H1 (cell line): ENCODE measurements at regions of chr15 and their contacts with region 1.

Region 1: GRCh38 chr15:73697033-73697467 is 12.9 kb downstream of the CD276 start:
- DNase-seq: no peak
- H3K4me3 ChIP-seq: no peak overlapping the region
- H3K27ac ChIP-seq: 0 out of 2 replicates have a peak overlapping the region, but pooled peaks have one; percentile 3
- H3K4me1 ChIP-seq: peaks cover 0 to 21% (median 9%) of the 10 kb centered on the region in 4 experiments; a peak in 6 of 7 replicates
- H3K27me3 ChIP-seq: no peaks in the 10 kb centered on the region
- CTCF ChIP-seq: no peak
- EP300 ChIP-seq: no peak
- POLR2A ChIP-seq: no peak
- RAD21 ChIP-seq: no peak

Region 2: GRCh38 chr15:73524919-73525318 is 172.1 kb before region 1 on chr15:
- CTCF ChIA-PET with region 1: no interaction called
- POLR2A ChIA-PET with region 1: no interaction called
- DNase-seq: no peak
- H3K4me3 ChIP-seq: no peak overlapping the region
- H3K27ac ChIP-seq: no peak overlapping the region
- H3K4me1 ChIP-seq: peaks cover 0 to 2% (median 0%) of the 10 kb centered on the region in 4 experiments; a peak in 1 of 7 replicates
- H3K27me3 ChIP-seq: no peaks in the 10 kb centered on the region
- CTCF ChIP-seq: no peak
- EP300 ChIP-seq: no peak
- POLR2A ChIP-seq: no peak
- RAD21 ChIP-seq: no peak

Region 3: DNA sequence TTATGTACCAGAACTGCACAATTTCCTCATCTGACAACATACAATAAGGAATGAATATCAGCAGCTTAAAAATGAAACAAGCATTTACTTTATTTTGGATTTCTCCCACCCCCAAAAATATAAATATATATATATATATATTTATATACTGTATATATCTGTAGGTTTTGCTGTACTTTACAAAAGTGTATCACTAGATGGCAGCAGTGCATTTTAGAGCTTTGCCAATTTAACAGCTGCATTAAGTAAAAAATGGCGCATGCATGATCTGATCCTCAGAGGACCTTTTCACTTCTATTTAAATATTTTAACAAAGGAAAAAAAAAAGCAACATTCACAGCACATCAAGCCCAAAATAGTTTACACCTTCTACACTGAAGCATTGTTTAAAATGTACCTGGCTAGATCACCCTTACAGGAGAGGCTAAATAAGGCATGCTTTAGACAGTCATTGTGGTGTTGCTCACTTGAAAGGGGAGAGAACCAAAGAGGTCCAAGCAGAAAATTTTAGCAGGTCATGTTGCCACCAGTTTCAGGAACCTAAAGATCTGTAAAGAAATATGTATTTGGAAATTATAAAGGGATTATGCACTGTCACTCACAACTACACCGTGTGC is 136.4 kb before region 1 on chr15:
- CTCF ChIA-PET with region 1: interaction called, 43 read pairs
- POLR2A ChIA-PET with region 1: no interaction called
- DNase-seq: no peak
- H3K4me3 ChIP-seq: no peak overlapping the region
- H3K27ac ChIP-seq: no peak overlapping the region
- H3K4me1 ChIP-seq: no peaks in the 10 kb centered on the region
- H3K27me3 ChIP-seq: no peaks in the 10 kb centered on the region
- CTCF ChIP-seq: peak in 1 of 3 experiments; percentile 44; a peak in 1 of 4 replicates
- EP300 ChIP-seq: no peak
- POLR2A ChIP-seq: no peak
- RAD21 ChIP-seq: peak; percentile 58 to 66

Region 4: GRCh38 chr15:73677146-73677607 is 19.9 kb before region 1 on chr15:
- CTCF ChIA-PET with region 1: interaction called, 496 read pairs
- POLR2A ChIA-PET with region 1: interaction called, 93 read pairs
- DNase-seq: peak in 1 of 2 experiments; percentile 85
- H3K4me3 ChIP-seq: no peak overlapping the region
- H3K27ac ChIP-seq: no peak overlapping the region
- H3K4me1 ChIP-seq: no peaks in the 10 kb centered on the region; a peak in 1 of 7 replicates
- H3K27me3 ChIP-seq: no peaks in the 10 kb centered on the region; a peak in 1 of 7 replicates
- CTCF ChIP-seq: peak; percentile 55 to 90 (median 88)
- EP300 ChIP-seq: no peak
- POLR2A ChIP-seq: no peak
- RAD21 ChIP-seq: peak; percentile 63 to 71

Region 5: DNA sequence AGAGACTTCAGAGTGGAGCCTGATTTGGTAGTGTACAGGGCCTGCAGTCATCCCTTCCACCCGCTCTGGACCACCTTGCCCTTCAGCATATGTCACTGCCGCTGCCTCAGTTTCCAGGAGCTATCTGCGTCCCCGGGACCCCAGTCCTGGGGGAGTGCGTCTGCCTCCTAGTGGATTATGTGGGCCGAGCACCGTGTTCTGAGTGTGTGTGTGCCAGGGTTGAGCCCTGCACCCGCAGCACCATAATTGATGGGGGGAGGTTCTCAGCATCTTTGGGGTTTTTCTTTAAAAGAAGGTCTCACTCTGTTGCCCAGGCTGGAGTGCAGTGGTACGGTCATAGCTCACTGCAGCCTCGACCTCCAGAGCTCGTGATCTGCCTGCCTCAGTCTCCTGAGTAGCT is 20.8 kb after region 1 on chr15:
- CTCF ChIA-PET with region 1: interaction called, 187 read pairs
- POLR2A ChIA-PET with region 1: no interaction called
- DNase-seq: no peak
- H3K4me3 ChIP-seq: no peak overlapping the region
- H3K27ac ChIP-seq: no peak overlapping the region
- H3K4me1 ChIP-seq: peaks cover 0 to 4% (median 0%) of the 10 kb centered on the region in 4 experiments; a peak in 1 of 7 replicates
- H3K27me3 ChIP-seq: no peaks in the 10 kb centered on the region
- CTCF ChIP-seq: peak; percentile 50 to 57 (median 53)
- EP300 ChIP-seq: no peak
- POLR2A ChIP-seq: no peak
- RAD21 ChIP-seq: peak; percentile 28 to 56; a peak in 3 of 4 replicates

Region 6: DNA sequence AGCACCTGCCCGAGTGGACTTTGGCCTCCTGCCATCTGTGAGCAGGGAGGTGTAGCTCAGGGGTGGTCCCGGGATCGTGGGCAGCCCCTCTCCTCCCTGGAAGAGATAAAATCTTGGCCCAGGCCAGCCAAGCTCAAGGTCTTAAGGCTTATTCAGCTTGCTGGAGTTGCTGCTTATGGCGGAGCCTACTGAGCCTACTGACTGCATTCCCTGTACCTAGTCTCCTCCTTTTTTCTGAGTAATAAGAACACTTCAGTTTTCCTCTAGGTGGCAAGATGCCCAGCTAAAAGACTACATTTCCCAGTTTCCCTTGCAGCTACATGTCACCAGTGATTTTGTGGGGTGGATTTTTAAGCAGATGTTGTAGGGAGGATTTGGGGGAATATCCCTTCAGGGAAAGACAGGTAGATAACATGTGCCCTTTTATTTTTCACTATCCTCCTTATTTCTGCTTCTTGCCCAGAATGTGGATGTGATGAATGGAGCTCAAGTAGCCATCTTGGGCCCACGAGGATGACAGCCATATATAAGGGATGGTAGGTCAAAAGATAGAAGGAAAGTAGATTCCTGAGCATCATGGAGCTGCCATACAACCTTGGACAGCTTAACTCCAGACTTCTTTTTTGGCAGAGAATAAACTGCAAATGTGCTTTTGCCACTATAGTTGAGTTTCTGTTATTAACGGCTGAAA is 97.5 kb after region 1 on chr15:
- CTCF ChIA-PET with region 1: no interaction called
- POLR2A ChIA-PET with region 1: no interaction called
- DNase-seq: no peak
- H3K4me3 ChIP-seq: no peak overlapping the region
- H3K27ac ChIP-seq: no peak overlapping the region
- H3K4me1 ChIP-seq: peaks cover 0 to 9% (median under 1%) of the 10 kb centered on the region in 4 experiments; a peak in 3 of 7 replicates
- H3K27me3 ChIP-seq: no peaks in the 10 kb centered on the region; a peak in 1 of 7 replicates
- CTCF ChIP-seq: no peak
- EP300 ChIP-seq: no peak
- POLR2A ChIP-seq: no peak
- RAD21 ChIP-seq: no peak

Region 7: DNA sequence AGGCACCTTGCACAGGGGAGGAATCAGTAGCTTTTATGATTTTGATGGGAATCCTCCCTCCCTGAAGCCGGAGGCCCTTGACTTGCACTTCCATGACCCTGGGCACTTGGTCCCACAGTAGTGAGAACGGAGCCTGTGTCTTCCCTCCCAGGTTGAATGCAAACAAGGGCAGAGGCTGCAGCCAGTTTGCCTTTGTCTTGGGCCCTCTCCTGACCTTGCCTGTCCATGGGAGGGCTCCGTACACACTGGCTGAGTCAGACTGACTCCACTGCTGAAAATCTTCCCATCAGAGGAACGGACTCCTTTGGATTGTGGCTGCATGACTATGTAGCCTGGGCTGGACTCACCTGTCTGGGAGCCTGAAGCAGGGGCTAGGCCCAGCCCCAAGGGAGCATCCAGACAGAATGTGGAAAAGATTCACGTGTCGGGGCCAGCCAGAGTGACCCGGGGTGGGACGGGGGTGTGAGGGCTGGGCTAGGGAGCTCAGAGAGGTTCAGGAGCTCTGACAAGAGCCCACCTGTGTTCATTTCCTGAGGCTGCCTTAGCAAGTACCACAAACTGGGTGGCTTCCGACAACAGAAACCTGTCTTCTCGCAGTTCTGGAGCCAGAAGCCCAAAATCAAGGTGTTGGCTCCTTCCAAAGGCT is 185.8 kb after region 1 on chr15:
- CTCF ChIA-PET with region 1: no interaction called
- POLR2A ChIA-PET with region 1: no interaction called
- DNase-seq: no peak
- H3K4me3 ChIP-seq: no peak overlapping the region
- H3K27ac ChIP-seq: no peak overlapping the region
- H3K4me1 ChIP-seq: no peaks in the 10 kb centered on the region; a peak in 1 of 7 replicates
- H3K27me3 ChIP-seq: no peaks in the 10 kb centered on the region
- CTCF ChIP-seq: no peak
- EP300 ChIP-seq: no peak
- POLR2A ChIP-seq: no peak
- RAD21 ChIP-seq: no peak

Region 8: GRCh38 chr15:73950831-73951561 is 253.9 kb after region 1 on chr15:
- CTCF ChIA-PET with region 1: no interaction called
- POLR2A ChIA-PET with region 1: no interaction called
- DNase-seq: peak; percentile 78 to 89
- H3K4me3 ChIP-seq: no peak overlapping the region; a peak in 1 of 8 replicates
- H3K27ac ChIP-seq: no peak overlapping the region
- H3K4me1 ChIP-seq: peaks cover 6 to 16% (median 12%) of the 10 kb centered on the region in 4 experiments
- H3K27me3 ChIP-seq: no peaks in the 10 kb centered on the region
- CTCF ChIP-seq: peak; percentile 68 to 92 (median 81)
- EP300 ChIP-seq: no peak
- POLR2A ChIP-seq: no peak
- RAD21 ChIP-seq: peak; percentile 81 to 87